GM12878 (cell line): ENCODE measurements at regions of chr5 and their contacts with region 1.

Region 1: DNA sequence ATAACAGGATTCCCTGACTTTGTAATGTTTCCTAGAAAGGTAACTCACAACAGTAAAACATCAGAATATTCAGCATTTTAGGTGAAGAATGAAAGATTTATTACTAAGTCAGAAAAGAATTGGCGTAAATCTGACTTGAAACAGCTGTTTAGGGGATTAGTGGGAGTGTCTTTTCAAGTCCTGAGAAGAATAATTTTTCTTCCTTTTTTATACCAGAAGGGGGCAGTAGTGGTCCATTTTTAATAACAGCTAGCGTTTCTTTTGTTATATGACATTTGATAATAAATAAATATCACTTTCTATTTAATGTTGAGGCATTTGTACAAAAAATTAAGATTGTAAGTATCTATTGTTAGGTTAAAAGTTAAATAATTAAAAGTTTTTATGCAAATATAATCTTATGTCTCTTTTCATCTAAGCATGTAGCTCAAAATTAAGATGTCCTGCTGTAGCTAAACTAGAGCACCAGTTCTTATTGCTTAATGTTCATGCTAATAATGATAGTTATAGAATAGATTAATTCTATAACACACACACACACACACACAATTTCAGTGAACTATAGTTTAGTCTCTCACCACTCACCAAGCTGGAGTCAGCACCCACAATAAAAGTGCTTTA is 258.7 kb upstream of the ARRDC3 start:
- DNase-seq: no peak
- ATAC-seq: peak; percentile 54
- H3K4me3 ChIP-seq: no peak overlapping the region
- H3K27ac ChIP-seq: no peak overlapping the region
- H3K4me1 ChIP-seq: no peaks in the 10 kb centered on the region
- H3K27me3 ChIP-seq: no peaks in the 10 kb centered on the region
- CTCF ChIP-seq: peak; percentile 36 to 51 (median 40); a peak in 4 of 6 replicates
- EP300 ChIP-seq: no peak
- POLR2A ChIP-seq: no peak
- RAD21 ChIP-seq: 0 out of 2 replicates have a peak, but pooled peaks have one; percentile 28

Region 2: DNA sequence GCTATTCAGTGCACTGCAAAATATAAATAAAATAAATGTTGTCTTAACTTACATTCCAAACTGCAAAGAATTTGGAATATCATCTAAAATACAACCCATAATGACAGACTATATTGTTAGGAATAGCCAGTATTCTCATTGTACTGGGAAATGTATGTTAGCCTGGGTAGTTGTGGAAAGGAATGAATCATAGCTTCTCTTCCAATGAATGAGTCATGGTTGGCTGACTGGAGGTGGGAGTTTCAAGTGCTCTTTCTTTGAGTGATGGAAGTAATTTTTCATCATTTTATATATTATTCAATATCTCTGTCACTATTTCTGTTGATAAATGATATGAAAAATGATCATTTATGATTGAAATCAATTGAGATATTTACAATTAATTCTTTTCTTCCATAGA is 100.1 kb before region 1 on chr5:
- CTCF ChIA-PET with region 1: no interaction called
- POLR2A ChIA-PET with region 1: no interaction called
- RAD21 ChIA-PET with region 1: no interaction called
- SMC1A ChIA-PET with region 1: no interaction called
- in situ Hi-C with region 1: no loop called
- intact Hi-C with region 1: no loop called
- DNase-seq: no peak
- ATAC-seq: no peak
- H3K4me3 ChIP-seq: no peak overlapping the region
- H3K27ac ChIP-seq: no peak overlapping the region
- H3K4me1 ChIP-seq: no peaks in the 10 kb centered on the region
- H3K27me3 ChIP-seq: no peaks in the 10 kb centered on the region
- CTCF ChIP-seq: no peak
- EP300 ChIP-seq: no peak
- POLR2A ChIP-seq: no peak
- RAD21 ChIP-seq: no peak

Region 3: DNA sequence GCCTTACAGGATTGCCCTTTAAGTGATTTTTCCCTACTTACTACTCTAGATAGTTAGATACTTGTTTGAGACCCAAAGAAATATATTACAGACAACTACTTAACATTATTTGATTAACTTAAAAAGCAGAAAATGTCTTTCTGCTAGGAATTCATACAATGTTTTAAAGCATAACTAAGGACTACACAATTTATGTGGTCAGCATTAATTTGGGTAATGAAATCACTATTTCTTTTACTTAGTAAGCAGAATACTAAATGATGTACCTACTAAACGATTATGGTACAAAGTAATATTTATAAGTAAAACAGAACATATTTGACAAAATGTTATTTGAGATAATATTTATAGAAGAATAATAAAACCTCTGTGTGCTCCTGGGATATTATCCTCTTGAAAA is 113.2 kb after region 1 on chr5:
- CTCF ChIA-PET with region 1: no interaction called
- POLR2A ChIA-PET with region 1: no interaction called
- RAD21 ChIA-PET with region 1: no interaction called
- SMC1A ChIA-PET with region 1: no interaction called
- in situ Hi-C with region 1: no loop called
- intact Hi-C with region 1: no loop called
- DNase-seq: no peak
- ATAC-seq: no peak
- H3K4me3 ChIP-seq: no peak overlapping the region
- H3K27ac ChIP-seq: no peak overlapping the region
- H3K4me1 ChIP-seq: no peaks in the 10 kb centered on the region
- H3K27me3 ChIP-seq: no peaks in the 10 kb centered on the region
- CTCF ChIP-seq: no peak
- EP300 ChIP-seq: no peak
- POLR2A ChIP-seq: no peak
- RAD21 ChIP-seq: no peak

Region 4: GRCh38 chr5:91928754-91929521 is 287.1 kb after region 1 on chr5:
- CTCF ChIA-PET with region 1: interaction called, 5 read pairs
- POLR2A ChIA-PET with region 1: no interaction called
- RAD21 ChIA-PET with region 1: interaction called, 4 read pairs
- SMC1A ChIA-PET with region 1: interaction called, 7 read pairs
- in situ Hi-C with region 1: no loop called
- intact Hi-C with region 1: loop called (anchors 5 kb)
- DNase-seq: no peak
- ATAC-seq: peak; percentile 62; the same call in 2 of the 3 replicates
- H3K4me3 ChIP-seq: no peak overlapping the region
- H3K27ac ChIP-seq: no peak overlapping the region
- H3K4me1 ChIP-seq: no peaks in the 10 kb centered on the region
- H3K27me3 ChIP-seq: no peaks in the 10 kb centered on the region
- CTCF ChIP-seq: peak in 2 of 3 experiments; percentile 29 to 38; a peak in 4 of 6 replicates
- EP300 ChIP-seq: no peak
- POLR2A ChIP-seq: no peak
- RAD21 ChIP-seq: peak; percentile 26; the same call in 1 of the 2 replicates

Region 5: DNA sequence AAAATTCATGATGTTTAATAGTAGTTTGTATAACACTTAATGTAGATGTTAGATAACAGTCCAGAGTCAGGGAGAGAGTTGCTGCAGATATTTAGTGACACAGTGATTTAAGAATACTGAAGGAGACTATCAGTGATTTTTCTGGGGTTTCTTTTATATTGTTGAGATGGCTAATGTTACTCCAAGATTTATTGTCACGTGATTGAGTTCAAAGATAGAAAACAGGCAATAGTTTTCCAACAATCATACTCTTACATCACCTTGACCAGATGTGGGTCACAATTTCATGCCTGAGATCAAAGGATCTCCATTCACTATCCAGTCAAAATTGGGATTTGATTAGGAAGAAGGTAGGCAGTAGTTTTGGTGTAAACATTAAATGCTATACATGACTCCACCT is 321.3 kb after region 1 on chr5:
- CTCF ChIA-PET with region 1: no interaction called
- POLR2A ChIA-PET with region 1: no interaction called
- RAD21 ChIA-PET with region 1: no interaction called
- SMC1A ChIA-PET with region 1: no interaction called
- in situ Hi-C with region 1: no loop called
- intact Hi-C with region 1: no loop called
- DNase-seq: no peak
- ATAC-seq: no peak
- H3K4me3 ChIP-seq: no peak overlapping the region
- H3K27ac ChIP-seq: no peak overlapping the region
- H3K4me1 ChIP-seq: no peaks in the 10 kb centered on the region
- H3K27me3 ChIP-seq: no peaks in the 10 kb centered on the region
- CTCF ChIP-seq: no peak
- EP300 ChIP-seq: no peak
- POLR2A ChIP-seq: no peak
- RAD21 ChIP-seq: no peak

Region 6: DNA sequence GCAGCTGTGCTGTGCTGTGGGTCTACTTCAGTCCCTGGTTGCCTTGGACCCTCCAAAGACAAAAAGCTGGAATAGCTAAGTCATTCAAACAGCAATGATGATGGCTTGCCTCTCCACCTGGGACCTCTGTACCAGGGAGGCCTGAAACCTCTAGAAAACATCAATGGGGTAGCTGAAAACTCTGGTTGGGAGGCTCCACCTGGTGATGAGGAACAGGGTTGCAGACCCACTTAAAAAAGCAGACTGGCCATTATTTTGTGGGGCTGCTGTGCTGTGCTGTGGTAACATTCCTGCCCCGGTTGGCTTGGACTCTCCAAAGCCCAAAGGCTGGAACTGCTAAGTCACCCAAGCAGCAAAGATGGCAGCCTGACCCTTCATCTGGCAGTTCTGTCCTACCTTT is 580.6 kb after region 1 on chr5:
- CTCF ChIA-PET with region 1: interaction called, 11 read pairs
- POLR2A ChIA-PET with region 1: no interaction called
- RAD21 ChIA-PET with region 1: interaction called, 4 read pairs
- SMC1A ChIA-PET with region 1: interaction called, 5 read pairs
- in situ Hi-C with region 1: no loop called
- intact Hi-C with region 1: no loop called
- DNase-seq: no peak
- ATAC-seq: no peak
- H3K4me3 ChIP-seq: no peak overlapping the region
- H3K27ac ChIP-seq: no peak overlapping the region
- H3K4me1 ChIP-seq: no peaks in the 10 kb centered on the region
- H3K27me3 ChIP-seq: no peaks in the 10 kb centered on the region
- CTCF ChIP-seq: no peak; a peak in 1 of 6 replicates
- EP300 ChIP-seq: no peak
- POLR2A ChIP-seq: no peak
- RAD21 ChIP-seq: no peak